ENCODE measurements at regions of chr7 and their contacts with region 1.

Region 1: GRCh38 chr7:1065263-1066260 is 21.2 kb downstream of the GPR146 start:
- DNase-seq: peak; percentile 73 to 90 (median 82)
- ATAC-seq: peak; percentile 97
- H3K4me3 ChIP-seq: peak overlapping the region; percentile 42
- H3K4me3 Mint-ChIP-seq: peak overlapping the region; percentile 66
- H3K27ac ChIP-seq: no peak overlapping the region
- H3K27ac Mint-ChIP-seq: no peak overlapping the region
- H3K4me1 ChIP-seq: peaks cover 18% of the 10 kb centered on the region
- H3K4me1 Mint-ChIP-seq: peaks cover 20% of the 10 kb centered on the region
- H3K27me3 ChIP-seq: peaks cover 0 to 4% of the 10 kb centered on the region in 2 experiments
- H3K27me3 Mint-ChIP-seq: no peaks in the 10 kb centered on the region
- CTCF ChIP-seq: peak; percentile 97

Region 2: GRCh38 chr7:909358-910329 is 155.9 kb before region 1 on chr7:
- CTCF ChIA-PET with region 1: interaction called, 13 read pairs
- POLR2A ChIA-PET with region 1: no interaction called
- intact Hi-C with region 1: loop called in 1 of 2 experiments (anchors 5 kb)
- DNase-seq: peak in 5 of 14 experiments; percentile 29 to 77 (median 52)
- ATAC-seq: peak; percentile 27
- H3K4me3 ChIP-seq: no peak overlapping the region
- H3K4me3 Mint-ChIP-seq: peak overlapping the region; percentile 81
- H3K27ac ChIP-seq: no peak overlapping the region
- H3K27ac Mint-ChIP-seq: peak overlapping the region; percentile 76
- H3K4me1 ChIP-seq: peaks cover 30% of the 10 kb centered on the region
- H3K4me1 Mint-ChIP-seq: peaks cover 11% of the 10 kb centered on the region
- H3K27me3 ChIP-seq: no peaks in the 10 kb centered on the region
- H3K27me3 Mint-ChIP-seq: no peaks in the 10 kb centered on the region
- CTCF ChIP-seq: peak; percentile 40

Region 3: DNA sequence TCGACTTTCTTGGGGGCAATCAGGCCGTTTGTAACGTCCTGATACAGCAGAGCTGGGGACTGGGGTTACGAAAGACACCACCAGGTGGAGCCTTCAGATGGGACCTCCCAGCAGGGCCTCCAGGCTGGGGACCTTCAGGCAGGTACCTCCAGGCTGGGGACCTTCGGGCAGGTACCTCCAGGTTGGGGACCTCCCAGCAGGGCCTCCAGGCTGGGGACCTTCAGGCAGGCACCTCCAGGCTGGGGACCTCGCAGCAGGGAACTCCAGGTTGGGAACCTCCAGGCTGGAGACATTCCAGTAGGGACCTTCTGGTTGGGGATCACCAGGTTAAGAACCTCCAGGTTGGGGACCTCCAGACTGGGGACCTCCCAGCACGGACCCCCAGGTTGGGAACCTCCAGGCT is 44.7 kb before region 1 on chr7:
- CTCF ChIA-PET with region 1: interaction called, 5 read pairs
- POLR2A ChIA-PET with region 1: no interaction called
- intact Hi-C with region 1: loop called in 1 of 2 experiments (anchors 2 kb)
- DNase-seq: peak in 3 of 14 experiments; percentile 25 to 54 (median 30)
- ATAC-seq: no peak
- H3K4me3 ChIP-seq: no peak overlapping the region
- H3K4me3 Mint-ChIP-seq: no peak overlapping the region
- H3K27ac ChIP-seq: no peak overlapping the region
- H3K27ac Mint-ChIP-seq: no peak overlapping the region
- H3K4me1 ChIP-seq: peaks cover 21% of the 10 kb centered on the region
- H3K4me1 Mint-ChIP-seq: peaks cover 16% of the 10 kb centered on the region
- H3K27me3 ChIP-seq: no peaks in the 10 kb centered on the region
- H3K27me3 Mint-ChIP-seq: no peaks in the 10 kb centered on the region
- CTCF ChIP-seq: no peak

Measured in CD4-positive, alpha-beta T cell (primary cell).